Heart left ventricle (tissue), 16 donors: ENCODE measurements at regions of chr4 and their contacts with region 1.

Region 1: GRCh38 chr4:178026999-178027398 is 584.8 kb upstream of the AGA start:
- DNase-seq: no peak
- ATAC-seq: peak in 2 of 4 donors; percentile 62 to 88
- H3K4me3 ChIP-seq: no peak overlapping the region
- H3K27ac ChIP-seq: peak overlapping the region in 2 of 12 donors; percentile 17 to 47
- H3K4me1 ChIP-seq: peaks cover 0 to 20% (median 1%) of the 10 kb centered on the region in 12 donors
- H3K27me3 ChIP-seq: no peaks in the 10 kb centered on the region
- CTCF ChIP-seq: no peak
- POLR2A ChIP-seq: no peak

Region 2: DNA sequence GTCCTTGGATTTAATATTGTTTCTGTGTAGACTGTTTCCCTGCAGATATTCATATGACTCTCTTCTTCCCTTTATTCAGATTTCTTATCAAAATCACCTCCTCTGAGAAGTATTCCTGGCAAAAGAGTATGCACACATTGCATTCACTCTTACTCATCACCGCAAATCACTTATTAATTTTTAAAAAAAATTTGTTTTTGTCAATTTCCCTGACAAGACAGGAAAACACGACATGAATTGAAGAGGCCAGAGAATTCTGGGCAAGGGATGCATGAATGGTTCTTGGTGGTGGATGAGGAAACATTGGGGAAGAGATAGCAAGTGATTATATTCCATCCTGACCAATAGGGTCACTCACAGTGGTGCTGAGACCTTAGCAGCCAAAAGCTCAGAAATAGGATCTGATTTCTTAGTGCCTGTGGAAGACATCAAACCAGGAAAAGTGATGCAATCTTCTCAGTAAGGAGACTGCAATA is 62.3 kb before region 1 on chr4:
- intact Hi-C with region 1: no loop called
- DNase-seq: no peak
- ATAC-seq: no peak
- H3K4me3 ChIP-seq: no peak overlapping the region
- H3K27ac ChIP-seq: no peak overlapping the region
- H3K4me1 ChIP-seq: no peaks in the 10 kb centered on the region
- H3K27me3 ChIP-seq: no peaks in the 10 kb centered on the region
- CTCF ChIP-seq: no peak
- POLR2A ChIP-seq: no peak

Region 3: GRCh38 chr4:178185517-178185916 is 158.5 kb after region 1 on chr4:
- intact Hi-C with region 1: loop called in 2 of 10 experiments (anchors 5 to 10 kb)
- DNase-seq: peak in 4 of 5 donors; percentile 35 to 62 (median 48)
- ATAC-seq: peak; percentile 96 to 98 (median 96)
- H3K4me3 ChIP-seq: no peak overlapping the region
- H3K27ac ChIP-seq: peak overlapping the region in 8 of 12 donors; percentile 26 to 72 (median 60)
- H3K4me1 ChIP-seq: peaks cover 0 to 7% (median 0%) of the 10 kb centered on the region in 12 donors
- H3K27me3 ChIP-seq: no peaks in the 10 kb centered on the region
- CTCF ChIP-seq: no peak
- POLR2A ChIP-seq: no peak

Region 4: GRCh38 chr4:178198691-178199090 is 171.7 kb after region 1 on chr4:
- intact Hi-C with region 1: loop called in 1 of 10 experiments (anchors 10 kb)
- DNase-seq: no peak
- ATAC-seq: peak in 2 of 4 donors; percentile 55 to 64
- H3K4me3 ChIP-seq: no peak overlapping the region
- H3K27ac ChIP-seq: peak overlapping the region in 1 of 12 donors; percentile 6
- H3K4me1 ChIP-seq: peaks cover 0 to 13% (median 0%) of the 10 kb centered on the region in 12 donors
- H3K27me3 ChIP-seq: no peaks in the 10 kb centered on the region
- CTCF ChIP-seq: no peak
- POLR2A ChIP-seq: no peak